PC-9 (cell line): ENCODE measurements at regions of chr18 and their contacts with region 1.

Region 1: GRCh38 chr18:48038636-48039035 is 108.2 kb upstream of the SMAD2 start:
- DNase-seq: no peak
- H3K4me3 ChIP-seq: no peak overlapping the region
- H3K27ac ChIP-seq: no peak overlapping the region
- H3K4me1 ChIP-seq: peaks cover 3% of the 10 kb centered on the region
- H3K27me3 ChIP-seq: 0 out of 2 replicates have a peak, but pooled peaks cover under 1% of the 10 kb centered on the region
- CTCF ChIP-seq: no peak

Region 2: GRCh38 chr18:48161191-48161910 is 122.7 kb after region 1 on chr18:
- CTCF ChIA-PET with region 1: interaction called, 10 read pairs
- POLR2A ChIA-PET with region 1: no interaction called
- intact Hi-C with region 1: no loop called
- DNase-seq: peak; percentile 58 to 63
- H3K4me3 ChIP-seq: peak overlapping the region; percentile 64
- H3K27ac ChIP-seq: peak overlapping the region; percentile 59
- H3K4me1 ChIP-seq: peaks cover 18% of the 10 kb centered on the region
- H3K27me3 ChIP-seq: no peaks in the 10 kb centered on the region
- CTCF ChIP-seq: no peak